Activated CD4-positive, alpha-beta memory T cell treated with anti-CD3 and anti-CD28 coated beads for 36 hours (primary cell): ENCODE measurements at regions of chrX and their contacts with region 1.

Region 1: GRCh38 chrX:149631234-149632165 is at the start of gene TMEM185A:
- DNase-seq: peak; percentile 83
- H3K4me3 Mint-ChIP-seq: peak within 1 kb of the TSS; percentile 87
- H3K27ac Mint-ChIP-seq: peak within 1 kb of the TSS; percentile 38
- H3K4me1 Mint-ChIP-seq: peaks cover 35% of the 10 kb centered on the region
- H3K27me3 Mint-ChIP-seq: no peaks in the 10 kb centered on the region
- total RNA-seq, gene TMEM185A: 10.5 to 12.7 TPM

Region 2: DNA sequence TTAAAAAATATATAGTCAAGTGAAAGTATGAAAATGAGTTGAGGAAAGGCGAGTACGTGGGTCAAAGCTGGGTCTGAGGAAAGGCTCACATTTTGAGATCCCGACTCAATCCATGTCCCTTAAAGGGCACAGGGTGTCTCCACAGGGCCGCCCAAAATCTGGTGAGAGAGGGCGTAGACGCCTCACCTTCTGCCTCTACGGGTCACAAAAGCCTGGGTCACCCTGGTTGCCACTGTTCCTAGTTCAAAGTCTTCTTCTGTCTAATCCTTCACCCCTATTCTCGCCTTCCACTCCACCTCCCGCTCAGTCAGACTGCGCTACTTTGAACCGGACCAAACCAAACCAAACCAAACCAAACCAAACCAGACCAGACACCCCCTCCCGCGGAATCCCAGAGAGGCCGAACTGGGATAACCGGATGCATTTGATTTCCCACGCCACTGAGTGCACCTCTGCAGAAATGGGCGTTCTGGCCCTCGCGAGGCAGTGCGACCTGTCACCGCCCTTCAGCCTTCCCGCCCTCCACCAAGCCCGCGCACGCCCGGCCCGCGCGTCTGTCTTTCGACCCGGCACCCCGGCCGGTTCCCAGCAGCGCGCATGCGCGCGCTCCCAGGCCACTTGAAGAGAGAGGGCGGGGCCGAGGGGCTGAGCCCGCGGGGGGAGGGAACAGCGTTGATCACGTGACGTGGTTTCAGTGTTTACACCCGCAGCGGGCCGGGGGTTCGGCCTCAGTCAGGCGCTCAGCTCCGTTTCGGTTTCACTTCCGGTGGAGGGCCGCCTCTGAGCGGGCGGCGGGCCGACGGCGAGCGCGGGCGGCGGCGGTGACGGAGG is 1720.1 kb before region 1 on chrX and contains the start of gene FMR1:
- CTCF ChIA-PET with region 1: no interaction called
- POLR2A ChIA-PET with region 1: no interaction called
- intact Hi-C with region 1: loop called (anchors 10 kb)
- DNase-seq: peak; percentile 95
- H3K4me3 Mint-ChIP-seq: peak within 1 kb of the TSS; percentile 90
- H3K27ac Mint-ChIP-seq: peak within 1 kb of the TSS; percentile 93
- H3K4me1 Mint-ChIP-seq: peaks cover 28% of the 10 kb centered on the region
- H3K27me3 Mint-ChIP-seq: no peaks in the 10 kb centered on the region
- total RNA-seq, gene FMR1: 28.0 to 29.0 TPM

Region 3: DNA sequence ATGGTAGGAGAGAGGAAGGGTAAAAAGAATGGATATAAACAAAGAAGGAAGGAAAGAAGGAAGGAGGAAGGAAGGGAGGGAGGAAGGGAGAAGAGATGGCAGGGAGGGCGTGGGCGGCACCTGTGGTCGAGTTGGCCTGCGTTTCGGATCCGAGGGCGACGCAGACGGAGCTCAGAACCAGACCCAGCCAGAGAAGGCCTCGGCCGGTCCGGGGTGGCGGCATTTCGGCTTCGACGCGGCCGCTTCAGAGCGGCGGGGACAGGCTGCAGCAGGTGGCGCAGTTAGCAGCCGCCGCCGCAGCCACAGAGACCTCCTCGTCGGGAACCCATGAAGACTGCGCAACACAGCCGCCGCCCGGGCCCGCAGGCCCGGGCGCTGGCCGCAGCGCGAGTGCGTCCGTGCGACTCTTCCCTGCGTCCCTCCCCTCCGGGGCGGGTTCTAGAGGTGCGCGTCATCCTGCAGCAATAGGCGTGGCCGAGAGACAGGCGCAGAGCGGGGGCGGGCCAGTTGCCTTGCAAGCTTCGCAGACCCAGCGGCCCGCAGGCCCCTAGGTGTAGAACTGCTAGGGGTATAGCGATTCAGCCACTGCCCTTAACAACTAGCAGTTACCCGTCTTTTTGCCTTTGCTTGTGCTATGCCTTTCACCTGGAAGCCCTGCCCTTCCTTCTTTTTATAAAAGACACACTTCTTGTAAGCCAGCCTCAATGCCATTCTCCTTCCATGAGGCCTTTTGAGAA is 126.4 kb before region 1 on chrX and contains the start of gene IDS:
- CTCF ChIA-PET with region 1: no interaction called
- POLR2A ChIA-PET with region 1: no interaction called
- intact Hi-C with region 1: loop called (anchors 1 kb)
- DNase-seq: peak; percentile 93
- H3K4me3 Mint-ChIP-seq: peak within 1 kb of the TSS; percentile 97
- H3K27ac Mint-ChIP-seq: peak within 1 kb of the TSS; percentile 99
- H3K4me1 Mint-ChIP-seq: peaks cover 25% of the 10 kb centered on the region
- H3K27me3 Mint-ChIP-seq: no peaks in the 10 kb centered on the region
- total RNA-seq, gene IDS: 71.6 to 72.2 TPM